Mammary epithelial cell (primary cell): ENCODE measurements at regions of chr11 and their contacts with region 1.

Region 1: GRCh38 chr11:118640332-118641154 is 33.1 kb downstream of the PHLDB1 start:
- DNase-seq: no peak
- H3K4me3 ChIP-seq: no peak overlapping the region
- H3K27ac ChIP-seq: no peak overlapping the region
- H3K4me1 ChIP-seq: peaks cover 16% of the 10 kb centered on the region
- H3K27me3 ChIP-seq: no peaks in the 10 kb centered on the region
- CTCF ChIP-seq: peak; percentile 43 to 78

Region 2: DNA sequence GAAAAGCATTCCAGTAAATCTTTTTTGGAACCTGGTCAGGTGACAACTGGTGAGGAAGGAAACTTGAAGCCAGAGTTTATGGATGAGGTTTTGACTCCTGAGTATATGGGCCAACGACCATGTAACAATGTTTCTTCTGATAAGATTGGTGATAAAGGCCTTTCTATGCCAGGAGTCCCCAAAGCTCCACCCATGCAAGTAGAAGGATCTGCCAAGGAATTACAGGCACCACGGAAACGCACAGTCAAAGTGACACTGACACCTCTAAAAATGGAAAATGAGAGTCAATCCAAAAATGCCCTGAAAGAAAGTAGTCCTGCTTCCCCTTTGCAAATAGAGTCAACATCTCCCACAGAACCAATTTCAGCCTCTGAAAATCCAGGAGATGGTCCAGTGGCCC is 137.3 kb before region 1 on chr11:
- CTCF ChIA-PET with region 1: no interaction called
- dilution Hi-C with region 1: no loop called
- in situ Hi-C with region 1: no loop called
- intact Hi-C with region 1: loop called (anchors 5 kb)
- DNase-seq: no peak
- H3K4me3 ChIP-seq: no peak overlapping the region
- H3K27ac ChIP-seq: no peak overlapping the region
- H3K4me1 ChIP-seq: no peaks in the 10 kb centered on the region
- H3K27me3 ChIP-seq: no peaks in the 10 kb centered on the region
- CTCF ChIP-seq: no peak

Region 3: DNA sequence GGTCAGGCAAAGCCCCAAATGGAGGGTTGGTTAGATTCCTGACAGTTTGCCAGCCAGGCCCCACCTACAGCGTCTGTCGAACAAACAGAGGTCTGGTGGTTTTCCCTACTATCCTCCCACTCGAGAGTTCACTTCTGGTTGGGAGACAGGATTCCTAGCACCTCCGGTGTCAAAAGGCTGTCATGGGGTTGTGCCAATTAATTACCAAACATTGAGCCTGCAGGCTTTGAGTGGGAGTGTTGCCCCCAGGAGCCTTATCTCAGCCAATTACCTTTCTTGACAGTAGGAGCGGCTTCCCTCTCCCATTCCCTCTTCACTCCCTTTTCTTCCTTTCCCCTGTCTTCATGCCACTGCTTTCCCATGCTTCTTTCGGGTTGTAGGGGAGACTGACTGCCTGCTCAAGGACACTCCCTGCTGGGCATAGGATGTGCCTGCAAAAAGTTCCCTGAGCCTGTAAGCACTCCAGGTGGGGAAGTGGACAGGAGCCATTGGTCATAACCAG is 117.9 kb before region 1 on chr11:
- CTCF ChIA-PET with region 1: no interaction called
- dilution Hi-C with region 1: no loop called
- in situ Hi-C with region 1: no loop called
- intact Hi-C with region 1: loop called (anchors 2 kb)
- DNase-seq: peak; percentile 26
- H3K4me3 ChIP-seq: no peak overlapping the region
- H3K27ac ChIP-seq: no peak overlapping the region
- H3K4me1 ChIP-seq: no peaks in the 10 kb centered on the region
- H3K27me3 ChIP-seq: no peaks in the 10 kb centered on the region
- CTCF ChIP-seq: peak; percentile 40 to 58

Region 4: GRCh38 chr11:118572061-118572980 is 68.2 kb before region 1 on chr11 and contains the start of gene ARCN1:
- CTCF ChIA-PET with region 1: no interaction called
- dilution Hi-C with region 1: loop called (anchors 5 kb)
- in situ Hi-C with region 1: no loop called
- intact Hi-C with region 1: no loop called
- DNase-seq: peak; percentile 53
- H3K4me3 ChIP-seq: peak within 1 kb of the TSS; percentile 77 to 100 (median 80)
- H3K27ac ChIP-seq: peak within 1 kb of the TSS; percentile 85
- H3K4me1 ChIP-seq: no peaks in the 10 kb centered on the region
- H3K27me3 ChIP-seq: no peaks in the 10 kb centered on the region
- CTCF ChIP-seq: no peak
- total RNA-seq, gene ARCN1: 115 to 155 TPM

Region 5: DNA sequence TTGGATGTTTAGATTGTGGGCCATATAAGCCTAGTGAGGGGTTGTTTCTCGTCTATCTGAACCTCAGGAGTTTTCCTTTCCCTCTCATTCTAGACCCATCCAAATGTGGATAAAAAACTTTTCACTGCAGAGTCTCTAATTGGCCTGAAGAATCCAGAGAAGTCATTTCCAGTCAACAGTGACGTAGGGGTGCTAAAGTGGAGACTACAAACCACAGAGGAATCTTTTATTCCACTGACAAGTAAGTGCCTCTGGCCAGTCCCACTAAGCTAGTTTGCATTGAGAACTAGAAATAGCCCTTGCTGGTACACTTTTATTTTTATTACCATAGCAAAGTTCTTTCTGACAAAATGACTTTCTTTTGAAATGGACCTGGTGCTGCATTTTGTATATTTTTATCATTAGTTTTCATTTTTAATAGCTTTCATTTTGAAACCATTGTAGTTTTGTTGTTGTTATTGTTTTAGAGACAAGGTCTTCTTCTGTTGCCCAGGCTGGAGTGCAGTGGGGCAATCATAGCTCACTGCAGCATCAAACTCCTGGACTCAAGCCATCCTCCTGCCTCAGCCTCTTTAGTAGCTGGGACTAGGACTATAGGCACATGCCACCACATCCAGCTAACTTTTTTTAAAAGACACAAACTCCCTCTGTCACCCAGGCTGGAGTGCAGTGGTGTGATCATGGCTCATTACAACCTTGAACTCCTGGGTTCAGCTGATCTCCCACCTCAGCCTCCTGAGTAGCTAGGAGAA is 47.8 kb before region 1 on chr11:
- CTCF ChIA-PET with region 1: no interaction called
- dilution Hi-C with region 1: no loop called
- in situ Hi-C with region 1: no loop called
- intact Hi-C with region 1: loop called (anchors 1 kb)
- DNase-seq: no peak
- H3K4me3 ChIP-seq: no peak overlapping the region
- H3K27ac ChIP-seq: no peak overlapping the region
- H3K4me1 ChIP-seq: no peaks in the 10 kb centered on the region
- H3K27me3 ChIP-seq: no peaks in the 10 kb centered on the region
- CTCF ChIP-seq: no peak